CD4-positive, alpha-beta T cell (primary cell): ENCODE measurements at regions of chr15 and their contacts with region 1.

Region 1: GRCh38 chr15:57861036-57861638 is 154.6 kb downstream of the POLR2M start:
- DNase-seq: peak in 6 of 14 experiments; percentile 7 to 74 (median 48)
- ATAC-seq: no peak
- H3K4me3 ChIP-seq: no peak overlapping the region
- H3K4me3 Mint-ChIP-seq: no peak overlapping the region
- H3K27ac ChIP-seq: no peak overlapping the region
- H3K27ac Mint-ChIP-seq: no peak overlapping the region
- H3K4me1 ChIP-seq: no peaks in the 10 kb centered on the region
- H3K4me1 Mint-ChIP-seq: no peaks in the 10 kb centered on the region
- H3K27me3 ChIP-seq: peaks cover 0 to 4% of the 10 kb centered on the region in 2 experiments
- H3K27me3 Mint-ChIP-seq: peaks cover 10% of the 10 kb centered on the region
- CTCF ChIP-seq: peak; percentile 96

Region 2: DNA sequence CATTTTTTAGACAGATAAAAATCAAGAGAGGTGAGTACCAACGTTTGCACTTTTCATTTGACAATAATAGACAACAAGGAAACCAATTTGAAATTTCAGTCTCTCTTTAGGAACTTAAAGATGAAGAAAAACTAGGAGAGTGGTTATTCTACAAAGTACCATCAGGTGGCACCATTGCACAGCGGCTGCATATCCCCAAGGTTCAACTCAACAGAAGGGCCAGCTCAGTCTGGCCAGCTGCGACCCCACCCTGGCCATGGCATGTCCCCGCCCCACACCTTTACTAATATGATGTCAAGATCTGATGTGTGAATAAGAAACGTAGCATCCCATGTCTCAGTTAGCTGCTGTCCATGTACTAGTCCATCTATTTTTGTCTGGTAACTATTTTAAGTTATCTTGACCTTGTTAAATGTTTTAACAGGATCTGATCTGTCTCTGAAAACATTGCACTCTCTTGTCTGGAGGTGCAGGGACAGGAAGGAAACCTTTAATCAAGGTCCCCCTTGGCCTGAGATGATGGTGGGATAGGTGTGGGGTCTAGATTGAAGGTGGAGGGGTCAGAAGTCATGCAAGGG is 520.4 kb before region 1 on chr15:
- CTCF ChIA-PET with region 1: no interaction called
- POLR2A ChIA-PET with region 1: no interaction called
- intact Hi-C with region 1: loop called in 1 of 2 experiments (anchors 5 kb)
- DNase-seq: peak in 6 of 14 experiments; percentile 10 to 57 (median 39)
- ATAC-seq: no peak
- H3K4me3 ChIP-seq: no peak overlapping the region
- H3K4me3 Mint-ChIP-seq: no peak overlapping the region
- H3K27ac ChIP-seq: no peak overlapping the region
- H3K27ac Mint-ChIP-seq: no peak overlapping the region
- H3K4me1 ChIP-seq: no peaks in the 10 kb centered on the region
- H3K4me1 Mint-ChIP-seq: no peaks in the 10 kb centered on the region
- H3K27me3 ChIP-seq: no peaks in the 10 kb centered on the region
- H3K27me3 Mint-ChIP-seq: no peaks in the 10 kb centered on the region
- CTCF ChIP-seq: peak; percentile 77

Region 3: DNA sequence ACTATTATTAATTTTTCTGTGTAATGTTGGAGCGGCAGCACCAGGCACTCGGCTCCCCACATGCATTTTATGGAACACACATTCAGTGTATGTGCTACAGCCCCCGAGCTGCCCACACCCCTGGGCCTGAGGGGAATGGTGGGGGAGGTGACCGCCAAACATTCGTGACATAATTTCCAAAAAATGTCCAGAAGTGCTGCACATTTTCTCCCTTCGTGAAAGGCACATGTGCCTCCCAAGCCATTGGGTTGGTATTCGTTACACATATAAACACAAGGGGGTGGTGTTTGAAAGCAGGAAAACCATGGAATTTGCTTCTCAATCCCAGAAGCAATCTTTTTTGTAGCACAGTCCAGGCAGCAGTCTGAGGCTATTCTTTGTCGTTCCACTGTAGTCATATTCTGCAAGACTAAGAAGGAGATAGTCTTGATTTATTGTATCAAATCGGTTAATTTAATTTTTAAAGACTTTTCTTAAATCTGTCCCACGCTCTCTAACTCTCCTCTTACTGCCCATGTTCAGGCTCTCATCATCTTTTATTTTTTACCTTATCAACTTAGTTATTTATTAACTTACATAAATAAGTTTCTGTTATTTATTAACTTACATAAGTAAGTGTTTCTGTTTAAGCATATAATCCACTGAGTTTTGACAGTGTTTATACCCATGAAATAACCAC is 193.8 kb before region 1 on chr15:
- CTCF ChIA-PET with region 1: no interaction called
- POLR2A ChIA-PET with region 1: no interaction called
- intact Hi-C with region 1: loop called (anchors 1 kb)
- DNase-seq: peak in 1 of 14 experiments; percentile 14
- ATAC-seq: no peak
- H3K4me3 ChIP-seq: no peak overlapping the region
- H3K4me3 Mint-ChIP-seq: no peak overlapping the region
- H3K27ac ChIP-seq: no peak overlapping the region
- H3K27ac Mint-ChIP-seq: no peak overlapping the region
- H3K4me1 ChIP-seq: no peaks in the 10 kb centered on the region
- H3K4me1 Mint-ChIP-seq: no peaks in the 10 kb centered on the region
- H3K27me3 ChIP-seq: peaks cover 0 to under 1% of the 10 kb centered on the region in 2 experiments
- H3K27me3 Mint-ChIP-seq: peaks cover 4% of the 10 kb centered on the region
- CTCF ChIP-seq: no peak

Region 4: GRCh38 chr15:57751177-57751800 is 109.8 kb before region 1 on chr15:
- CTCF ChIA-PET with region 1: interaction called, 5 read pairs
- POLR2A ChIA-PET with region 1: no interaction called
- intact Hi-C with region 1: loop called (anchors 5 kb)
- DNase-seq: no peak
- ATAC-seq: no peak
- H3K4me3 ChIP-seq: no peak overlapping the region
- H3K4me3 Mint-ChIP-seq: no peak overlapping the region
- H3K27ac ChIP-seq: no peak overlapping the region
- H3K27ac Mint-ChIP-seq: no peak overlapping the region
- H3K4me1 ChIP-seq: peaks cover 3% of the 10 kb centered on the region
- H3K4me1 Mint-ChIP-seq: no peaks in the 10 kb centered on the region
- H3K27me3 ChIP-seq: no peaks in the 10 kb centered on the region
- H3K27me3 Mint-ChIP-seq: no peaks in the 10 kb centered on the region
- CTCF ChIP-seq: no peak